ENCODE measurements at regions of chr13 and their contacts with region 1.

Region 1: DNA sequence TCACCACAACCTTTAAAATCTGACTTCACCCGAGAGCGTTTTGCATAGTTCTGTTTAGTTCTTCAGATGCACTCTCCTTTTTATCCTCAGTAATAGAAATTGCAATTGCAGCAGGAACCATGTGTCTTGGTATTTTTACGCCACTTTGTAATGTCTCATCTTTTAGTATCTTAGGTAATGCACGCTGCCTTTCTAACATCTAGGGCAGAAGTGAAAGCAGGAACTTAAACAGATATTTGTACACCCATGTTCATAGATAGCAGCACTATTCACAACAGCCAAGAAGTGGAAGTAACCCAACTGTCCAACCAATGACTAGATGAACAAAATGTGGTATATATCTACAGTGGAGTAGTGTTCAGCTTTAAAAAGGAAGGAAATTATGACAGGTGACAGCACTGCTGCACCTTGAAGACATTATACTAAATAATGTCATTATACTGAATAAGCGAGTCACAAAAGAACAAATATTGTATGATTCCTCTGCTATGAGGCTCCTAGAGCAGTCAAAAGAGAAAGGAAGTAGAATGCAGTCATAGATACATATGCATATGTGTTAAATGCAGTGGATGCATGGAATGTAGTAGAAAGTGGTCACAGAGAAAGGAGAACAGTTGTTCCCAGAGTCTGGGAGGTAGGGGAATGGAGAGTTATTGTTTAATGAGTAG is 105.9 kb upstream of the GJB6 start:
- H3K4me3 ChIP-seq: no peak overlapping the region
- H3K27ac ChIP-seq: no peak overlapping the region
- H3K4me1 ChIP-seq: no peaks in the 10 kb centered on the region
- CTCF ChIP-seq: no peak

Region 2: DNA sequence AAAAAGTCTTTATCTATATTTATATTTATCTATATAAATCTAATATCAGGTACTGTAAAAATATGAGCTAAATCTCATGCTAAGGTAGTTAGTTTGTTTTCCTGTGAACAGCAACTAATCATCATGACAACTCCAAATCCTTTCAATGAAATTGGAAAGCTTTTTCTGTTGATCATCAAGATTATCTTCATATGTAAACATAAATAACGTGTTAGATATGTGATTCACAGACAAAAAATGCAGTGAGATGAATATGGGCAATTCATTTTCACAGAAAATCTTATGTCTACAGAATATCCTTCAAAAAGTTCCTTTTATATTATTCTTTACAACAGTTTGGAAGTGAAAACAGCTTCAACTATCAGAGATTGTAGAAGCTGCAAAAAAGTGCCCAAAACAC is 477.5 kb after region 1 on chr13:
- CTCF ChIA-PET with region 1: interaction called, 11 read pairs
- POLR2A ChIA-PET with region 1: no interaction called
- H3K4me3 ChIP-seq: no peak overlapping the region
- H3K27ac ChIP-seq: no peak overlapping the region
- H3K4me1 ChIP-seq: peaks cover 12% of the 10 kb centered on the region; the same call in 1 of the 2 replicates
- CTCF ChIP-seq: no peak